Motor neuron (in vitro differentiated cells): ENCODE measurements at regions of chr1 and their contacts with region 1.

Region 1: GRCh38 chr1:242467556-242468145 is 56.8 kb downstream of the PLD5 start:
- ATAC-seq: peak in 7 of 8 experiments; percentile 39 to 77 (median 62)
- H3K4me3 ChIP-seq: no peak overlapping the region
- H3K27ac ChIP-seq: no peak overlapping the region
- H3K4me1 ChIP-seq: no peaks in the 10 kb centered on the region

Region 2: GRCh38 chr1:242225776-242226573 is 241.7 kb before region 1 on chr1:
- in situ Hi-C with region 1: no loop called
- ATAC-seq: peak in 1 of 8 experiments; percentile 72
- H3K4me3 ChIP-seq: no peak overlapping the region
- H3K27ac ChIP-seq: peak overlapping the region; percentile 28 to 72
- H3K4me1 ChIP-seq: peaks cover 27 to 49% of the 10 kb centered on the region in 2 donors

Region 3: GRCh38 chr1:242523719-242524570 is 56.3 kb after region 1 on chr1:
- in situ Hi-C with region 1: no loop called
- ATAC-seq: peak; percentile 26 to 93 (median 86)
- H3K4me3 ChIP-seq: peak overlapping the region; percentile 53 to 88 (median 85)
- H3K27ac ChIP-seq: peak overlapping the region; percentile 31 to 64
- H3K4me1 ChIP-seq: peaks cover 8 to 10% of the 10 kb centered on the region in 2 donors

Region 4: DNA sequence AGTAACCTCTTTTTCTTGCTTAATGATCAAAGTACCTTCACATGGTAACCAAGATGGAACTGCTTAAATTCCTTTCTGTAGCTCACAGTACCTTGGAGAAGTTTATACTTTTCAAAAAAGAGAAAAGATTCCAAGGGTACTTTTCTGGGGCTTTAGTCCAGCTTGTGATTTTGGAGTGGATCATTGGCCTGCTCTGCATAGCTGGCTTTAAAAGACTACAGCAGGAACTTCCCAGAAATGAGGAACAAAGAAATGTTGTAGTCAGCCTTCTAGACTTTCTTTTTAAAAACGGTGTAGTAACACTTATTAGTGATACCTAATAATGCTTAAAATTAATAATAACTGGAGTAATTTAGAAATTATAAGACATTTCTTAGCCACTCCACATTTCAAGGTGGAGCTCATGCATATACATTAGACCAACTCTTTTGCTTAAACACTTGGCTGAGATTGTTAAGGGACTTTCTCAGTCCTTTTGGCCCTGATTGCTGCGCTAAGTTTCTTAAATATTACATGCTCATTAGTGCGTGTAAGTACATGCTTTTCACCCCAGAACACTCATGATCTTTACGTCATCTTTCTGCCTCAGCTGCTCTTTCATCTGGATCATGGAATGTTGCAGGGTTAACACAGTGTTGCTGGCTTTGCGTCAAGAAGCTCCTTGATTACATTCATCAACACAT is 845.4 kb after region 1 on chr1:
- in situ Hi-C with region 1: loop called in 3 of 9 experiments (anchors 25 kb)
- ATAC-seq: no peak
- H3K4me3 ChIP-seq: no peak overlapping the region
- H3K27ac ChIP-seq: no peak overlapping the region
- H3K4me1 ChIP-seq: peaks cover 6 to 13% of the 10 kb centered on the region in 2 donors